CD4-positive, alpha-beta T cell (primary cell): ENCODE measurements at regions of chr3 and their contacts with region 1.

Region 1: GRCh38 chr3:44624749-44625480 is at the start of gene ZNF197:
- DNase-seq: peak; percentile 7 to 70 (median 36)
- ATAC-seq: peak; percentile 56
- H3K4me3 ChIP-seq: peak within 1 kb of the TSS; percentile 93
- H3K4me3 Mint-ChIP-seq: peak within 1 kb of the TSS; percentile 93
- H3K27ac ChIP-seq: no peak within 1 kb of the TSS
- H3K27ac Mint-ChIP-seq: peak within 1 kb of the TSS; percentile 82
- H3K4me1 ChIP-seq: peaks cover 18% of the 10 kb centered on the region
- H3K4me1 Mint-ChIP-seq: peaks cover 54% of the 10 kb centered on the region
- H3K27me3 ChIP-seq: no peaks in the 10 kb centered on the region
- H3K27me3 Mint-ChIP-seq: no peaks in the 10 kb centered on the region
- CTCF ChIP-seq: no peak
- total RNA-seq, gene ZNF197: 3.2 to 3.5 TPM

Region 2: DNA sequence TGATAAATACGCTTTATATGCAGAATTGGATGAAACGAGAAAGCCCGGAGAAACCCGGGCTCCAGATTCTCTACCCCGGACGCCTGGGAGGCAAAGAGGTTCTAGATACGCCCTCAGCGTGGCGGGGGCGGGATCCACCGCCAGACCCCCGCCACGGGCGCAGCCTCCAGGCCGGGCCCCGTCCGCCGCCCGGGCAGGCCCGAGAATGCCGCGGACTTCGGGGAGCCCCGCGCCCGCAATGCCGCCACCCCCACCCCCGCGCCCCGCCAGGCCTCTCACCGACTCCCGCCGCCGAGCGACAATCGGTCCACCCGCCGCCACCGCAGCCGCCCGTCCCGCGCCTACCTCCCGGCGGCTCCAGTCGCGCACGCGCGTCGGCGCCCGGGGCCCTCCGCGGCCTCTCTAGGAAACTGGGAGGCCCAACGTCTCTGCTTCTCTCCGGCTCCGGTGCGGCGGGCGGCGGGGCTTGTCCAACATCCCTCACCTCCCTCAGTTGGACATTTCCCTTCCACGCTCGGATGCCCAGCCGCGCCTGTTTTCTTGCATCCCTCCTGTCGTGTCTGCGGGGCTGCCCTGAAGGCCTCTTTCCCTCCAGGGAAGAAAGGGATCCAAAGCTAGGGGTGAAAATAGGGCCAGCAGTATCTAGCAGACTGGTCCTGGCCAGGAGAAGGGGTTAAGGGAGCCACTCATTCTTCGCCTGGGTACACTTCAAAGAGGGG is 147.4 kb before region 1 on chr3 and contains the start of gene ZNF445:
- CTCF ChIA-PET with region 1: no interaction called
- POLR2A ChIA-PET with region 1: no interaction called
- intact Hi-C with region 1: loop called in 1 of 2 experiments (anchors 2 kb)
- DNase-seq: peak; percentile 53 to 90 (median 72)
- ATAC-seq: peak; percentile 87
- H3K4me3 ChIP-seq: peak within 1 kb of the TSS; percentile 65
- H3K4me3 Mint-ChIP-seq: peak within 1 kb of the TSS; percentile 97
- H3K27ac ChIP-seq: peak within 1 kb of the TSS in 1 of 2 donors; percentile 56
- H3K27ac Mint-ChIP-seq: peak within 1 kb of the TSS; percentile 93
- H3K4me1 ChIP-seq: peaks cover 19% of the 10 kb centered on the region
- H3K4me1 Mint-ChIP-seq: peaks cover 39% of the 10 kb centered on the region
- H3K27me3 ChIP-seq: no peaks in the 10 kb centered on the region
- H3K27me3 Mint-ChIP-seq: no peaks in the 10 kb centered on the region
- CTCF ChIP-seq: no peak
- total RNA-seq, gene ZNF445: 6.1 to 6.6 TPM